CD8-positive, alpha-beta T cell (primary cell): ENCODE measurements at regions of chr1 and their contacts with region 1.

Region 1: GRCh38 chr1:26787706-26788514 is at the start of gene PIGV:
- DNase-seq: peak; percentile 80 to 96 (median 87)
- ATAC-seq: peak; percentile 68
- H3K4me3 ChIP-seq: peak within 1 kb of the TSS; percentile 91 to 95
- H3K4me3 Mint-ChIP-seq: peak within 1 kb of the TSS; percentile 99
- H3K27ac ChIP-seq: peak within 1 kb of the TSS; percentile 81 to 97
- H3K27ac Mint-ChIP-seq: peak within 1 kb of the TSS; percentile 100
- H3K4me1 ChIP-seq: peaks cover 52% of the 10 kb centered on the region
- H3K4me1 Mint-ChIP-seq: peaks cover 78% of the 10 kb centered on the region
- H3K27me3 ChIP-seq: no peaks in the 10 kb centered on the region
- H3K27me3 Mint-ChIP-seq: no peaks in the 10 kb centered on the region
- CTCF ChIP-seq: no peak
- total RNA-seq, gene PIGV: 9.5 to 12.7 TPM

Region 2: DNA sequence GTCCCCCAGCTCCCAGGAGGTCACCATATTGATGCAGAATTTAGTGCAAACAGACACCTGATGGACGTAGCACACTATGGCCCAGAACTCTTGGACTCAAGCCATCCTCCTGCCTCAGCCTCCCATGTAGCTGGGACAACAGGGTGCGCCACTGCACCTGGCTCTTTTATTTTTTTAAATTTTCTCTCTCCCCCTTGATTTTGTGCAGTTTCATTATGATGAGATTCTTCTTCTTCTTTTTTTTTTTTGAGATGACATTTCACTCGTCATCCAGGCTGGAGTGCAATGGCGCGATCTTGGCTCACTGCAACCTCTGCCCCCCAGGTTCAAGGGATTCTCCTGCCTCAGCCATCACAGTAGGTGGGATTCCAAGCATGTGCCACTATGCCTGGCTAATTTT is 194.5 kb before region 1 on chr1:
- CTCF ChIA-PET with region 1: interaction called, 439 read pairs
- POLR2A ChIA-PET with region 1: interaction called, 4 read pairs
- intact Hi-C with region 1: no loop called
- DNase-seq: no peak
- ATAC-seq: no peak
- H3K4me3 ChIP-seq: no peak overlapping the region
- H3K4me3 Mint-ChIP-seq: no peak overlapping the region
- H3K27ac ChIP-seq: no peak overlapping the region
- H3K27ac Mint-ChIP-seq: no peak overlapping the region
- H3K4me1 ChIP-seq: no peaks in the 10 kb centered on the region
- H3K4me1 Mint-ChIP-seq: peaks cover 4% of the 10 kb centered on the region
- H3K27me3 ChIP-seq: no peaks in the 10 kb centered on the region
- H3K27me3 Mint-ChIP-seq: no peaks in the 10 kb centered on the region
- CTCF ChIP-seq: no peak

Region 3: DNA sequence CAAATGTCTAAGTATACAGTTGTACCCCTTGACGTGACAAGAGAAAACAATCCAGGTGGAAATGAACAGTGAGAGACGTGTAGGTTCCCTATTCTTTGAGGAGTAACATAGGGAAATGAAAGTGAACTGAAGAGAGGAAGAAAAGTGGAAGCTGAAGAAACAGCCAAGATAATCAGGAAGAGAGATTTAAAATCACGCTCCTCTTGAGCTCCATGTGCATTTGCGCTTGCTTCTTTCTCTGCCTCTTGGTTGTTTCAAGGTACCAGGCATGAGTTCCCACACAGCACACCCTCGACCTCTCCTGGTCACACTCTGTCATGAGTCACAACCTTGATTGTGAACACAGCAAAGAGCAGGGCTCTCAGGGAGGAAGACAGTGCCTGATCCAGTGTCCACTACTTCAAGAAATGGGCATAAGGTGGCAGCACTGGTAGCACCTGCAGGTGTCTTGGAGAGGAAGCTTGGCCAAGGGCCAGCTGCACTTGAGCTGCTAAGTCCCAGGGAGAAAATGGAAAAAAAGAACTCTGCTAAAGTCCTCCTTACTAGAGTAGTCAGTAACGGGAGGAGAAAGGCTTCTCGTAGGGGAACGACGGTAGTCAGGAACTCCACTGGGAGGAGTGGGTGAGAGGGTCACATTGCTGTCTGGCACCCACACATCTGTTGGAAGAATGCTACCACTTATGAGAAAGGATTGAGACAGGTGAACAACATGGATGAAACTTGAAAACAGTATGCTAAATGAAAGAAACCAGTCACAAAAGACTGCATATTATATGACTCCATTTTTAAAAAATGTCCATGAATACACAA is 110.4 kb before region 1 on chr1:
- CTCF ChIA-PET with region 1: interaction called, 60 read pairs
- POLR2A ChIA-PET with region 1: interaction called, 10 read pairs
- intact Hi-C with region 1: loop called (anchors 1 kb)
- DNase-seq: peak; percentile 16 to 82 (median 55)
- ATAC-seq: peak; percentile 94
- H3K4me3 ChIP-seq: no peak overlapping the region
- H3K4me3 Mint-ChIP-seq: peak overlapping the region; percentile 29
- H3K27ac ChIP-seq: no peak overlapping the region
- H3K27ac Mint-ChIP-seq: peak overlapping the region; percentile 23
- H3K4me1 ChIP-seq: peaks cover 11% of the 10 kb centered on the region
- H3K4me1 Mint-ChIP-seq: peaks cover 18% of the 10 kb centered on the region
- H3K27me3 ChIP-seq: no peaks in the 10 kb centered on the region
- H3K27me3 Mint-ChIP-seq: no peaks in the 10 kb centered on the region
- CTCF ChIP-seq: peak; percentile 48

Region 4: GRCh38 chr1:26744075-26744959 is 43.6 kb before region 1 on chr1:
- CTCF ChIA-PET with region 1: interaction called, 16 read pairs
- POLR2A ChIA-PET with region 1: interaction called, 37 read pairs
- intact Hi-C with region 1: loop called (anchors 1 to 2 kb)
- DNase-seq: peak; percentile 42 to 93 (median 79)
- ATAC-seq: peak; percentile 91
- H3K4me3 ChIP-seq: peak overlapping the region; percentile 22 to 31
- H3K4me3 Mint-ChIP-seq: peak overlapping the region; percentile 66
- H3K27ac ChIP-seq: peak overlapping the region; percentile 13 to 84
- H3K27ac Mint-ChIP-seq: peak overlapping the region; percentile 91
- H3K4me1 ChIP-seq: peaks cover 90% of the 10 kb centered on the region
- H3K4me1 Mint-ChIP-seq: peaks cover 89% of the 10 kb centered on the region
- H3K27me3 ChIP-seq: no peaks in the 10 kb centered on the region
- H3K27me3 Mint-ChIP-seq: no peaks in the 10 kb centered on the region
- CTCF ChIP-seq: no peak

Region 5: GRCh38 chr1:26811057-26811456 is 23.1 kb after region 1 on chr1:
- CTCF ChIA-PET with region 1: interaction called, 30 read pairs
- POLR2A ChIA-PET with region 1: interaction called, 4 read pairs
- intact Hi-C with region 1: no loop called
- DNase-seq: peak in 2 of 9 experiments; percentile 63 to 78
- ATAC-seq: peak; percentile 27
- H3K4me3 ChIP-seq: no peak overlapping the region
- H3K4me3 Mint-ChIP-seq: no peak overlapping the region
- H3K27ac ChIP-seq: peak overlapping the region in 1 of 2 experiments; percentile 64
- H3K27ac Mint-ChIP-seq: peak overlapping the region; percentile 58
- H3K4me1 ChIP-seq: peaks cover 8% of the 10 kb centered on the region
- H3K4me1 Mint-ChIP-seq: peaks cover 14% of the 10 kb centered on the region
- H3K27me3 ChIP-seq: no peaks in the 10 kb centered on the region
- H3K27me3 Mint-ChIP-seq: no peaks in the 10 kb centered on the region
- CTCF ChIP-seq: no peak

Region 6: DNA sequence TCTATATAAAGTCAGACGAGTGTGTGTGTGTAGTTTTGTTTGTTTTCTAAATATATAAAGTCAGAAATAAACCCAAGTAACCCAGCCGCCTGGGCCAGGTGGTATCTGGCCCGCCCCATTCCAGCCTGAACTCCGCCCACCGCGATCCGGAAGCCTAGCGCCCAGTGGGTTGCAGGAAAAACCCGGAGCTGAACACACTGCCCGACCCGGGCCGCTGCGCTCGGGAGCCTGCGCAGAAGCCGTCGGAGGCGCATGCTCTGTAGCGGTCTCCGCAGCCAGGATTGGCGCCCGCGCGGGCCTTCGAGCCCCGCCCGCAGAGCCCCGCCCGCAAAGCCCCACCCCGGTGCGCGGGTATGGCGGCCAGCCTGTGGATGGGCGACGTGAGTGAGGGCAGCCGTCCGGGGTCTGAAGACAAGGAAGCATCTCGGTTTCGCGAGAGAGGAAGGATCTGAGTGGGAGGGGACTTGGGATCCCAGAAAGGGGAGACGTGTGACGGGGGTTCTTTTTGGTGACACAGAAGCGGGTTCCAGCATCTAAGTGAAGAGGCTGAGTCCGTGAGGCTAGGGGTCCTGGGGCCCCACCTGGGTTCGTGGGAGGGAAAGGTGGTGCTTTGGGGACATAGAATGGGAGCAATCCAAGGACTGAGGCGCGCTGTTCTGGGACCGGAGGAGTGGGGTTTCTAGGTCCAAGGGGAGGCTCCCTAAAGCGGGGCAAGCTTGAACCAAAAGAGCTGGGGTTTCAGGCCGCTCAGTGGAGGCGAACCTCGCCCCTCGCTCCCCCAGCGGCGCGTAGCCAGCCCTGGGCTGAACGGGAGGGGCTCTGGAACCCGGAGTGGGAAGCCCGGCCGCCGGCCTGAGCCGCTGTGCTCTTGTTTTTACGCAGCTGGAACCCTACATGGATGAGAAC is 1765.1 kb after region 1 on chr1 and contains the start of gene TRNAU1AP:
- CTCF ChIA-PET with region 1: no interaction called
- POLR2A ChIA-PET with region 1: no interaction called
- intact Hi-C with region 1: loop called in 1 of 2 experiments (anchors 5 kb)
- DNase-seq: peak; percentile 95 to 98 (median 97)
- ATAC-seq: peak; percentile 96
- H3K4me3 ChIP-seq: peak within 1 kb of the TSS; percentile 91 to 98
- H3K4me3 Mint-ChIP-seq: peak within 1 kb of the TSS; percentile 99
- H3K27ac ChIP-seq: peak within 1 kb of the TSS; percentile 77 to 86
- H3K27ac Mint-ChIP-seq: peak within 1 kb of the TSS; percentile 99
- H3K4me1 ChIP-seq: peaks cover 15% of the 10 kb centered on the region
- H3K4me1 Mint-ChIP-seq: peaks cover 24% of the 10 kb centered on the region
- H3K27me3 ChIP-seq: no peaks in the 10 kb centered on the region
- H3K27me3 Mint-ChIP-seq: no peaks in the 10 kb centered on the region
- CTCF ChIP-seq: no peak
- total RNA-seq, gene TRNAU1AP: 20.5 to 25.7 TPM